GM12878 (cell line): ENCODE measurements at regions of chr4 and their contacts with region 1.

Region 1: GRCh38 chr4:24686871-24687680 is 102.7 kb upstream of the DHX15 start:
- DNase-seq: no peak
- ATAC-seq: peak; percentile 82
- H3K4me3 ChIP-seq: no peak overlapping the region
- H3K27ac ChIP-seq: no peak overlapping the region
- H3K4me1 ChIP-seq: no peaks in the 10 kb centered on the region
- H3K27me3 ChIP-seq: peaks cover 0 to 4% of the 10 kb centered on the region in 2 experiments; a peak in 2 of 4 replicates
- CTCF ChIP-seq: peak; percentile 64 to 74 (median 73)
- EP300 ChIP-seq: no peak
- POLR2A ChIP-seq: no peak
- RAD21 ChIP-seq: peak; percentile 68

Region 2: DNA sequence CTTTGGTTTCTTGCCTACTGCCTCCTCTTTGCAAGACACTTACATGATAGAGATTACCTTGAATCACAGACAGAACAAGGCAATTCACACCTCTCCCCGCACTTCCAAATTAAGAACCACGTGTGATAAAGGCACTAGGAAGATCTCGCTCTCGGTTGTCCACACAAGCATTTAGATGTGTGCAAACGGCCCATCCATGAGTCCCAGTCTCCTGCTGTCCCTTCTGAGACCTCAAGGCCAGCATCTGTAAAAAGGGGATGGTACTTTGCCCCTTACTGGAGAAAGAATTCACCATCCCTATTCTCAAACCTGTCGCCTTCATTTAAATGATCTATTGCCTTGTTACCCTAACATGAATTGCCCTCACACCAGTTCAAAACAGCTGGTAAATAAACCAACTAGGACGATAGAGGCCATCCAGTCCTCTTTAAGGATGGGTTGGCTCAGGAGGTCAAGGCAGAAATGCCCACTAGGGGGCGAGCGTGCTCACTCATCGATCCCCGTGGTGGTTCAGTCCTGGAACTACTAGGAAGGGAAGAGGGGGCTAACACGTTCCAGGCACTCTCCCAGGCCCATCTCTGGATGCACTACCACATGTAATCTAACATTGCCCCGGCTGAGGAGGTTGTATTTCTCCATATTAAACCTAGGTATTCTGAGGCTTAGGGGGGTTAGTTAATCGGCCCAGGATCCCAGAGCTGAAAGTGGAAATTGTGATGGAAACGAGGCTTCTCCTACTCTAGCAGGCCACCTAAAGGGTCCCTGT is 198.5 kb before region 1 on chr4:
- CTCF ChIA-PET with region 1: interaction called, 51 read pairs
- POLR2A ChIA-PET with region 1: no interaction called
- RAD21 ChIA-PET with region 1: interaction called, 6 read pairs
- SMC1A ChIA-PET with region 1: interaction called, 5 read pairs
- in situ Hi-C with region 1: loop called (anchors 5 kb)
- intact Hi-C with region 1: loop called (anchors 1 kb)
- DNase-seq: peak; percentile 5
- ATAC-seq: peak; percentile 99
- H3K4me3 ChIP-seq: no peak overlapping the region
- H3K27ac ChIP-seq: no peak overlapping the region
- H3K4me1 ChIP-seq: no peaks in the 10 kb centered on the region
- H3K27me3 ChIP-seq: no peaks in the 10 kb centered on the region
- CTCF ChIP-seq: peak; percentile 82 to 94 (median 88); a peak in 5 of 6 replicates
- EP300 ChIP-seq: no peak
- POLR2A ChIP-seq: no peak
- RAD21 ChIP-seq: peak; percentile 79